PC-9 (cell line): ENCODE measurements at regions of chr3 and their contacts with region 1.

Region 1: GRCh38 chr3:185687271-185687878 is 101.3 kb downstream of the SENP2 start:
- DNase-seq: peak; percentile 21 to 51
- H3K4me3 ChIP-seq: no peak overlapping the region
- H3K27ac ChIP-seq: peak overlapping the region; percentile 93
- H3K4me1 ChIP-seq: peaks cover 59% of the 10 kb centered on the region
- H3K27me3 ChIP-seq: no peaks in the 10 kb centered on the region
- CTCF ChIP-seq: no peak

Region 2: GRCh38 chr3:185667574-185667973 is 19.8 kb before region 1 on chr3:
- CTCF ChIA-PET with region 1: no interaction called
- POLR2A ChIA-PET with region 1: no interaction called
- intact Hi-C with region 1: no loop called
- DNase-seq: no peak
- H3K4me3 ChIP-seq: no peak overlapping the region
- H3K27ac ChIP-seq: no peak overlapping the region
- H3K4me1 ChIP-seq: no peaks in the 10 kb centered on the region
- H3K27me3 ChIP-seq: no peaks in the 10 kb centered on the region
- CTCF ChIP-seq: no peak

Region 3: GRCh38 chr3:185779461-185779860 is 92.1 kb after region 1 on chr3:
- CTCF ChIA-PET with region 1: no interaction called
- POLR2A ChIA-PET with region 1: no interaction called
- intact Hi-C with region 1: loop called (anchors 1 kb)
- DNase-seq: no peak
- H3K4me3 ChIP-seq: no peak overlapping the region
- H3K27ac ChIP-seq: no peak overlapping the region
- H3K4me1 ChIP-seq: peaks cover 21% of the 10 kb centered on the region
- H3K27me3 ChIP-seq: no peaks in the 10 kb centered on the region
- CTCF ChIP-seq: no peak